ENCODE measurements at regions of chr12 and their contacts with region 1.

Region 1: GRCh38 chr12:62813031-62813829 is 121.7 kb downstream of the PPM1H start:
- DNase-seq: peak; percentile 38
- H3K4me3 ChIP-seq: peak overlapping the region; percentile 2; the same call in 1 of the 2 replicates
- H3K27ac ChIP-seq: no peak overlapping the region
- H3K27me3 ChIP-seq: peaks cover 5% of the 10 kb centered on the region
- CTCF ChIP-seq: peak; percentile 84

Region 2: DNA sequence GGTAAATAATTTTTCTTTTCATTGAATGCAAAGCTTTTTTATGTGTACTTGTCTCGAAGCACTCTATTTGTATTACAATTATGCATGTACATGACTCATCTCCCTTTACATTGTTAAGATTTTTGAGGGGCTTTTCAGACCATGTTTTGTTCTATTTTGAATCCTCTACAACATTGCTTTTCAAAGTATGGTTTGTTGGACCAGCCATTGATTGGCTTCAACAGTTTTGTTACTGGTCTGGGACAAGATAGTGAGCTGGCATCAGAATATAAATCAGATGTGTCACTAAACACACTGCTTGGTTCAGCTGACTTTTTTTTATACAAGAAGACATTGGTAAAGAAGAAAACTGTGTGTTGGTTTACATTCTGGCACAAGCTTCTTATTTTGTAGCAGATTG is 224.3 kb before region 1 on chr12:
- CTCF ChIA-PET with region 1: interaction called, 48 read pairs
- POLR2A ChIA-PET with region 1: no interaction called
- DNase-seq: peak; percentile 4
- H3K4me3 ChIP-seq: no peak overlapping the region
- H3K27ac ChIP-seq: no peak overlapping the region
- H3K27me3 ChIP-seq: no peaks in the 10 kb centered on the region
- CTCF ChIP-seq: no peak

Region 3: DNA sequence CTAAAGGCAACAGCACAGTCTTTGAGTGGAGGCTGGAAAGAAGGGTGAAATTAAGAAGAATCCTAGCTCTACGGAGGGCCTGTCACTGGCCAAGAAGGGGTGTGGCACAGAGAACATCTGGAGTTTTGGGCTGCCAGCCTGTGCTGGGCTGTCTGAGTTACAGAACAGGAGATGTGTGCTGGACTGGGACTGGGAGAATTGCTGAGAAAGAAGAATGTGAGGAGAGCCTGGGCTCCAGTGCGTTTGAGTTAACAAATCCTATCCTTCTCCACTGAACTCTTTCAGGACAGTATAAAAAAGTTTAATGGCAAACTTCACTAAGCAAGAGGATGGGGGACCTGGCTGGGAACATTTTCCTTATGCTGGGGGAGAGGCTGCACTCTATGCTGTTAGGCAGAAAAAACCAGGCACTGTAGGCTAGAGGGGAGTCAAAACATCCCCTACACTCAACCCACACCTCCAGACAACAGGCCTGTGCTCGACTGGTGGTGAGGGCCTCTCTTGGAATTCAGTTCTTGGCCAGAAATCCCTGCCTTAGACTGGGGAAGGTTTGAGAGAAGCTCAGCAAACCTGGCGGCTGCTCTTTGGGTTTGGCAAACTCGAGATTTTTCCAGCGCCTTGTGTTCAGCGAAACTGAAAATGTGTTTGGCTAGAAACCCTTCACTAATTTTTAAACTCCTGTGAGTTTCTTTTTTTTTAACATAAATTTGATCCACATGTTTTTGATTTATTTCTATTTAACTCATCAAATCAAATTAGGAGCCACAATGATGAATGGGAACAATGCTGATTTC is 129.3 kb before region 1 on chr12:
- CTCF ChIA-PET with region 1: no interaction called
- POLR2A ChIA-PET with region 1: no interaction called
- DNase-seq: no peak
- H3K4me3 ChIP-seq: no peak overlapping the region
- H3K27ac ChIP-seq: peak overlapping the region; percentile 52
- H3K27me3 ChIP-seq: no peaks in the 10 kb centered on the region
- CTCF ChIP-seq: no peak

Region 4: GRCh38 chr12:62799126-62799736 is 14.0 kb before region 1 on chr12:
- CTCF ChIA-PET with region 1: interaction called, 26 read pairs
- POLR2A ChIA-PET with region 1: no interaction called
- DNase-seq: peak; percentile 43
- H3K4me3 ChIP-seq: no peak overlapping the region
- H3K27ac ChIP-seq: no peak overlapping the region
- H3K27me3 ChIP-seq: peaks cover 2% of the 10 kb centered on the region
- CTCF ChIP-seq: peak; percentile 98

Region 5: DNA sequence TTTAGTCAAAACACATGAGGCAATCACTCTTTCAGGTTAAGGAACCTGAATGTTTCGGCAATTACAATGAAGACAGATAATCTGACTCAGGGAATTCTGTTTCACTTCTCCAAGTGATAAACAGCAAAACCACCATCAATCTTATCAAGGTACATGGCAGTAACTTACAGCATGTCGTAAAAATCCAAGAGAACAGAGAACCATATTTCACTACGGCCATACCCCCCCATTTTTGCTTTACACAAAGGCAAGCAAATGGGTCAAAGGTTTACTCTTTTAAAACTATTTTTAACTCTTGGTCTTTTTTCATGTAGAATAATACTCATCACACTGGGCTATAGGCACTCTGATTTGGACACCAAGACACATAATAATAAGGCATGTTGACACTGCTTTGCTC is 19.3 kb after region 1 on chr12:
- CTCF ChIA-PET with region 1: interaction called, 13 read pairs
- POLR2A ChIA-PET with region 1: no interaction called
- DNase-seq: no peak
- H3K4me3 ChIP-seq: no peak overlapping the region
- H3K27ac ChIP-seq: no peak overlapping the region
- H3K27me3 ChIP-seq: peaks cover 5% of the 10 kb centered on the region
- CTCF ChIP-seq: no peak

Region 6: DNA sequence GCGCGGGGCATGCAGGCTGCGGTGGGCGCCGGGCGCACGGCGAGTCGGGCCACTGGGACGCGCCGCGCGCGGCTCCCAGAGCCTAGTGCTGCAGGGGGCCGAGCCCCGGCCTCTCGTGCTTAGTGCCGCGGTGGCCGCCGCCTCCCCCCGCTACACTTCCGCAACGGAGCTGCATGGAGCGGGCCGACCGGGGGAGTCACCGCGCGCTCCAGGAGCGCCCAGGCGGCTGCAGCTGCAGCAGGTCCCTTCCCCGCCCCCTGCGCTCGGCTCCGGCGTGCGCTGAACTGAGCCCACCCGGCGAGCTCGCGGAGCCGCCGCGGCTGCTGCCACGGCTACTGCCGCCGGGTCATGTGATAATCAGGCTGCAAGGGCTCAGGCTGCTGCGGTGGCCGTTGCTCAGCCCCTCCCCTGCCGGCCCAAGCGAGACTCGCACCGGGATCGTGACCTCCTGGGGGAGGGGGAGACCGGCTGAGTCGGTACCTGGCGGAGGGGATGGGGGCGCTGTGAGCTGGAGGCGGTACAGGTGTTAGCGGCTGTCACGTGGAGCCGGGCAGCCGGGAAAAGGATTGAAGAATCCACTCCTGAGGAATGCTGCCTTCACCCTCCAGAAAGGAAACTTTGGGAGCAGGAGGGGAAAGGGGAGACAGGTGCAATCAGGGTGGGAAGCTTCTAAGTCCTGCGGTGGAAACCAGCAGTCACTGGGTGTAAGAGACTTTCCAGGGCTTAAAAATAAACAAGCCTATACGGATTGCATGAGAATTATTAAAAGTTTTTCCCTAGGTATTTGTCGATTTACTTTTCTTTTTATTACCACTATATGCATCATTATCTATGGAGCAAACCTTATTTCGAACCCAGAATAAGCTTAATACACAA is 121.8 kb after region 1 on chr12 and contains the start of gene PPM1H:
- CTCF ChIA-PET with region 1: interaction called, 11 read pairs
- POLR2A ChIA-PET with region 1: no interaction called
- DNase-seq: no peak
- H3K4me3 ChIP-seq: peak within 1 kb of the TSS; percentile 65
- H3K27ac ChIP-seq: no peak within 1 kb of the TSS
- H3K27me3 ChIP-seq: peaks cover 22% of the 10 kb centered on the region
- CTCF ChIP-seq: peak; percentile 18; the same call in 1 of the 2 replicates
- polyA plus RNA-seq, gene PPM1H: 0.12 and 0.19 TPM in 2 replicates

Region 7: GRCh38 chr12:63045020-63045860 is 232.0 kb after region 1 on chr12:
- CTCF ChIA-PET with region 1: no interaction called
- POLR2A ChIA-PET with region 1: no interaction called
- DNase-seq: peak; percentile 16
- H3K4me3 ChIP-seq: no peak overlapping the region
- H3K27ac ChIP-seq: peak overlapping the region; percentile 63
- H3K27me3 ChIP-seq: no peaks in the 10 kb centered on the region
- CTCF ChIP-seq: no peak